ENCODE measurements at regions of chr5 and their contacts with region 1.

Region 1: DNA sequence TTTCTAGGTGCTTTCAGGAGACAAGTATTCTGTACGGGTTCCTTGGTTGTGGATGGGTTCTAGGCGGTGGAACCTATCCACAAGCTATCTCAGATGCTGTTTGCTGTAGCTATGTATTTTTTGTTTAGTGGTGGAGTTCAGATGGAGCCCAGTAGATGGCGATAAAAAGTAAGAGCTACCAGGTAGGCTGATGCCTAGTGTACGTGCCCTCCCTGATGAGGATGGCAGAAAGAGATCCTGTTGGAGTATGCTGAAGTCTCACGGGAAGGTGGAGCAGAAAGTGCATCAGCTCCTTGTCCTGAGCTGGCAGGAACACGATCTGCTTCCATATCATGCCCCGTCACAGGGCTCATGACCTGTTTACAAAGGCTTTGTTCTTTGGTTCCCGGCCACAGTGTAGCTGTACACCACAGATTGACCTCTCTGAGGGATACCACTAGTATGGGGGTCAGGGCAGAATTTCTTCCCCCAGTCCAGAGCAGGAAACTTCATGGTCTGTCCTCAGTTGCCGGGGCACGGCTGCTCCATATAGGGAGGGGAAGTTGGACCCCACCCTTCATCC is 12.6 kb upstream of the UGT3A2 start:
- DNase-seq: no peak
- H3K4me3 Mint-ChIP-seq: no peak overlapping the region
- H3K27ac Mint-ChIP-seq: no peak overlapping the region
- H3K4me1 Mint-ChIP-seq: no peaks in the 10 kb centered on the region
- H3K27me3 Mint-ChIP-seq: peaks cover 8% of the 10 kb centered on the region

Region 2: DNA sequence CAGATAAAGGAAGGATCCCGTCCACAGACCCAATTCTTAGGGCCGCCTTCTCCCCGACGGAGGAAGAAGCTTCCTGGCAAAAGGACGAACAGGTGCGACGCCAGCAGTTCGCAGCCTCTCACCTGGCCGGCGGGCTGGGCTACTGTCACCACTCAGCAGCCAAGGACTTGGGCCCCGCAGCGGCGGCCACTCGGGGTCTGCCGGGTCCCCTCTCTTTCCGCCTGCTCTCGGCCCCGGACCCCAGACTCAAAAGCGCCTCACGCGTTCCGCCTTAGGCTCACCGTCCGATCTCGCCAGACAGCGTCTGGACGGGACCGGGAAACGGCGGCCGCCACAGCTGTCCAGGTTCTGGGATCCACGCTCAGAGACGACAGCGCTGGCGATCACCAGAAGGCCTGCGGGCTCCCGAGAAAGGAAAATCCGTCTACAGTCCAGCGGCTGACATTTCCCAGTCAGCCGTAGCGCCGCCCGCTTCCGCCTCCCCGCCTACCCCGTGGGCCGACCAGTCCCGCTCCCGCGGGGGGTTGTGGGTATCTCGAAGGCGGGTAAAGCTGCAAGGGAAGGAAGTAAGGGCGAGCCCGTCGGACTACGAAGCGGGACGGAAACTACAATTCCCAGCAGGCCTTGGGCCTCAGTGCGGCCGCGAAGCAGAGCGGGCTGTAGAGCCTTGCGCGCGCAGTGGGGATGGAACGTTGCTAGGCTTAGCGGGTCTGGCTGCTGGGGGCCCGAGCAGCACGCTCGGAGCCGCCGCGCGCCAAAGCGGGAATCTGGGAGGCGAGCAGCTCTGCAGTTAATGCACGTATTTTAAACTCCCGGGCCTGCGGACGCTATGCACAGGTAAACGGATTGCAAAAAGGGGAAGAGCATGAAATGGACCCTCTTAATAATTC is 72.4 kb after region 1 on chr5 and contains the starts of genes LMBRD2 and SKP2:
- intact Hi-C with region 1: loop called (anchors 10 kb)
- DNase-seq: peak; percentile 97
- H3K4me3 Mint-ChIP-seq: peak within 1 kb of the TSS; percentile 95
- H3K27ac Mint-ChIP-seq: peak within 1 kb of the TSS; percentile 88
- H3K4me1 Mint-ChIP-seq: peaks cover 44% of the 10 kb centered on the region
- H3K27me3 Mint-ChIP-seq: no peaks in the 10 kb centered on the region
- total RNA-seq, gene LMBRD2: 9.3 and 11.6 TPM in 2 replicates
- total RNA-seq, gene SKP2: 56.6 and 58.9 TPM in 2 replicates

Region 3: GRCh38 chr5:36241631-36242533 is 162.6 kb after region 1 on chr5 and contains the start of gene NADK2:
- intact Hi-C with region 1: loop called (anchors 10 kb)
- DNase-seq: peak; percentile 92
- H3K4me3 Mint-ChIP-seq: peak within 1 kb of the TSS; percentile 82
- H3K27ac Mint-ChIP-seq: peak within 1 kb of the TSS; percentile 94
- H3K4me1 Mint-ChIP-seq: peaks cover 28% of the 10 kb centered on the region
- H3K27me3 Mint-ChIP-seq: peaks cover 12% of the 10 kb centered on the region
- total RNA-seq, gene NADK2: 17.8 and 19.4 TPM in 2 replicates

Region 4: DNA sequence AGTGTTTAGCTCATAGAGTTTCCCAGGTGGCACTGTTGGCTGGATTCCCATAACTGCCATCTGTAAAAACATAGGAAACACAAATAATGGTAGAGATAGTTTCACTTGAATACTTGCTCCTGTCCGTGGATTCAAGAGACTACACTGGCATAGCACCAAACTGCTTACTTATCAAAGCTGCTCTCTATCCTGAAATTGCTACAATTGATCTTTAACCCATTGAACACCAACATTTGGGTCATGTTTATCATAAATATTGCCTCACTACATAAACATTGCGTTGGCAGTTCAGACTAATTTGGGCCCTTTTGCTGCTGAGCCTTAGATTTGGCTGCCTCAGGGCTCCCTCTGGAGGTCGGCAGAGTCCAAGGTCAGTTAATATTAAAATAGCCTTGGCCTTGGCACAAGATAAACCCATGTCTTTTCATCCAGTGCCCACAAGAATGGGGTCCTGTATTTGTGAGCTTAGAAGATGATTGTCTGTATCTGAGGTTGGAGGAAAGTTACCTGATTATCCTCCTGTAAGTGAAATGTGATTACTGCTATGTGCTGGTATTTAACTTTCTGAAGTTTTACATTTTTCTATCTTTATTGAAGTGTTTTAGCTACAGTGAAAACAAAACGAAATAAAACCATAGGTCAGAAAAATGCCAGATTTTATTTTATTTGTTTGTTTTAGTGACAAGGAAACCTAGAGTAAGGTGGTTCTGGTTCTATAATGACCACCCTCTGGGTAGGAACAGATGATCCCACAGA is 226.5 kb after region 1 on chr5:
- intact Hi-C with region 1: loop called (anchors 2 kb)
- DNase-seq: no peak
- H3K4me3 Mint-ChIP-seq: no peak overlapping the region
- H3K27ac Mint-ChIP-seq: no peak overlapping the region
- H3K4me1 Mint-ChIP-seq: peaks cover 2% of the 10 kb centered on the region
- H3K27me3 Mint-ChIP-seq: peaks cover 15% of the 10 kb centered on the region

Region 5: GRCh38 chr5:36507332-36507952 is 428.2 kb after region 1 on chr5:
- intact Hi-C with region 1: loop called (anchors 5 kb)
- DNase-seq: peak; percentile 52
- H3K4me3 Mint-ChIP-seq: no peak overlapping the region
- H3K27ac Mint-ChIP-seq: no peak overlapping the region
- H3K4me1 Mint-ChIP-seq: no peaks in the 10 kb centered on the region
- H3K27me3 Mint-ChIP-seq: peaks cover 2% of the 10 kb centered on the region